GM12878 (cell line): ENCODE measurements at regions of chr1 and their contacts with region 1.

Region 1: DNA sequence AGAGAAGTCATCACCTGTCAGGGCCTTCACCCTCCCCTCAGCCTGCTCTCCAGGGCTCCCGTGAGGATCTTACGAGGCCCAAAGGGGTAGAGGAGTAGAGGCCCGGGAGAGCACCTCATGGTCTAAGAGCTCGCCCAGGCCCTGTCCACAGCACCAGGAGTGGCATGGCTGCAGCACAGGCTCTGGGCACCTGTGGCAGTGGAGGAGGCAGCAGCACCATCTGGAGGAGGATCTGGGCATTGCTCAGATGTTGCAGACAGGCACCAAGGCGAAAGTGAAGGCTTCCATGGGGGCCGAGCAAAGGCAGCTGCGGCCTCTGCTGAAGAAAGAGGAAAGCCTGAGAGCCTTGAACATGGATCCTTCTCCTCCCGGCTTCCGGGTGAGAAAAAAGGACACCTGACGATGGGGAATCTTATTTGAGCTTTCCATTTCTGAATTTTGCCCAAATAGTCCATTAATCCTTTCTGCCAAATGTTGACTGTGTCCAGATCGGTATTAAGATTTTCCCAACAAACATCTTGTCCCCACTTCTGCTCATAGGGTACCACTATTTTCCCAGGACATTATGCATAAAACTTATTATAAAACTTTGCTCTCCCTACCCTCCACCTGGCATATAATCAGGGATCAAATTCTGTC is 604.7 kb downstream of the PTPRC start:
- DNase-seq: peak; percentile 67
- ATAC-seq: peak; percentile 100
- H3K4me3 ChIP-seq: no peak overlapping the region
- H3K27ac ChIP-seq: no peak overlapping the region
- H3K4me1 ChIP-seq: peaks cover 11% of the 10 kb centered on the region
- H3K27me3 ChIP-seq: no peaks in the 10 kb centered on the region
- CTCF ChIP-seq: peak; percentile 91 to 94 (median 93)
- EP300 ChIP-seq: no peak
- POLR2A ChIP-seq: no peak
- RAD21 ChIP-seq: peak; percentile 96

Region 2: GRCh38 chr1:198788561-198789064 is 454.9 kb before region 1 on chr1:
- CTCF ChIA-PET with region 1: interaction called, 21 read pairs
- POLR2A ChIA-PET with region 1: no interaction called
- RAD21 ChIA-PET with region 1: interaction called, 13 read pairs
- SMC1A ChIA-PET with region 1: interaction called, 20 read pairs
- in situ Hi-C with region 1: no loop called
- intact Hi-C with region 1: no loop called
- DNase-seq: no peak
- ATAC-seq: peak; percentile 99
- H3K4me3 ChIP-seq: no peak overlapping the region
- H3K27ac ChIP-seq: no peak overlapping the region
- H3K4me1 ChIP-seq: no peaks in the 10 kb centered on the region
- H3K27me3 ChIP-seq: no peaks in the 10 kb centered on the region
- CTCF ChIP-seq: peak; percentile 30 to 37 (median 32); a peak in 3 of 6 replicates
- EP300 ChIP-seq: peak in 1 of 2 experiments; percentile 11; a peak in 1 of 4 replicates
- POLR2A ChIP-seq: no peak
- RAD21 ChIP-seq: peak; percentile 48; the same call in 1 of the 2 replicates

Region 3: GRCh38 chr1:198922638-198923430 is 320.7 kb before region 1 on chr1:
- CTCF ChIA-PET with region 1: interaction called, 20 read pairs
- POLR2A ChIA-PET with region 1: no interaction called
- RAD21 ChIA-PET with region 1: interaction called, 11 read pairs
- SMC1A ChIA-PET with region 1: interaction called, 9 read pairs
- in situ Hi-C with region 1: no loop called
- intact Hi-C with region 1: no loop called
- DNase-seq: peak; percentile 71
- ATAC-seq: peak; percentile 82
- H3K4me3 ChIP-seq: no peak overlapping the region
- H3K27ac ChIP-seq: peak overlapping the region; percentile 42
- H3K4me1 ChIP-seq: peaks cover 20% of the 10 kb centered on the region
- H3K27me3 ChIP-seq: no peaks in the 10 kb centered on the region
- CTCF ChIP-seq: no peak
- EP300 ChIP-seq: peak; percentile 66 to 77; a peak in 3 of 4 replicates
- POLR2A ChIP-seq: no peak
- RAD21 ChIP-seq: peak; percentile 13; the same call in 1 of the 2 replicates

Region 4: DNA sequence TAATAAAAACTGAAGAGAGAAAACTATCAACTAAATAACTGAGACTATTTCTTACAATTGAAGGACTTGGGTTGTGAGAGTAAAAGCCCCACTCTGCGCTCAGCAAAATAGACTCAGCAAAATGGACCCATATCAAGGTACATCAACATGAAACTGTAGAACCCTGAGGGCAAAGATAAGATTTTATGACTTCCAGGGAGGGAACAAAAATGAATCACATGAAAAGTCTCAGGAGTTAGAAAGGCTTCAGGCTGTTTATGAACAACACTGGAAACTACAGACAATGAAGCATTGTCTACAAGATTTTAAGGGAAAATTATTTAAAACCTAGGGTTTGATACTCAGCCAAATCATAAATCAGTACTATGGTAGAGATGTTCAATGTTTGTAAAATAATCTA is 170.4 kb before region 1 on chr1:
- CTCF ChIA-PET with region 1: interaction called, 9 read pairs
- POLR2A ChIA-PET with region 1: no interaction called
- RAD21 ChIA-PET with region 1: interaction called, 3 read pairs
- SMC1A ChIA-PET with region 1: interaction called, 15 read pairs
- in situ Hi-C with region 1: no loop called
- intact Hi-C with region 1: no loop called
- DNase-seq: no peak
- ATAC-seq: no peak
- H3K4me3 ChIP-seq: no peak overlapping the region
- H3K27ac ChIP-seq: no peak overlapping the region
- H3K4me1 ChIP-seq: peaks cover under 1% of the 10 kb centered on the region; the same call in 1 of the 2 replicates
- H3K27me3 ChIP-seq: no peaks in the 10 kb centered on the region
- CTCF ChIP-seq: no peak
- EP300 ChIP-seq: no peak
- POLR2A ChIP-seq: no peak
- RAD21 ChIP-seq: no peak

Region 5: DNA sequence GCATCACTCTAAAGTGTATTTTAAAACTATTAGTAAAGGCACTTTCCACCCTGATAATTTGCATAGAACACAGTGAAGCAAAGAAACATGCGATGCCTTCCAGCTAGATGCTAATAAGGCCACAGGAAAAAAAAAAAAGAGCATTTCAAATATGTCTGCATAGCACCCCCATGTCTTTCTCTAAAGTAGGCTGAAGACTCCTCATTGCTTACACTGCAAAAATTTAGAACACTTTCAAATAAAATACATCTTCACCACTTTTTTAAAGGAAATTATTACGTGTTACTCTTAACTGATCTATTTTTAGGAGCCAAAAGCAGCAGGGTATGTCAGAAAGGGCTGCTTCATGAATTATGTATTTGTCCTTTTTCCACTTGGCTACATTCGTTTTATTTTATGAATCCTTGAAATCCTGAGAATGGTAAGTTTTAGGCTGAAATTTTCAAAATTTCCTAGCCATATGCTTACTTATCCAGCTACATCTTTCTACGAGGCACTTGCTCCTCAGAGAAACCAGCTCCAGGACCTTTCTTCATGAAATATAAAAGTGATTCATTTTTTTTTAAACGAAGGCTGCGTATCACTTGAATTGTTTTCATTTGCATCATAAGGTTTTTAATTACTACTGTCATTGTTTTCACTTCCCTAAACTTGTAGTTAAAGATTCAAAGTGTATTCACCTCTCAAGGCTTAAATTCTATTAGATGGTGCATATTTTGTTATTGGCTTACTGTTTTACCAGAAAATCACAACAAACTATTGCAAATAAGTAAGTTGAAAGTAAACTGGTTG is 91.7 kb before region 1 on chr1:
- CTCF ChIA-PET with region 1: interaction called, 10 read pairs
- POLR2A ChIA-PET with region 1: no interaction called
- RAD21 ChIA-PET with region 1: interaction called, 5 read pairs
- SMC1A ChIA-PET with region 1: interaction called, 17 read pairs
- in situ Hi-C with region 1: no loop called
- intact Hi-C with region 1: no loop called
- DNase-seq: no peak
- ATAC-seq: peak; percentile 85
- H3K4me3 ChIP-seq: no peak overlapping the region; the same call in 1 of the 2 replicates
- H3K27ac ChIP-seq: peak overlapping the region; percentile 13; the same call in 1 of the 2 replicates
- H3K4me1 ChIP-seq: peaks cover 12% of the 10 kb centered on the region; the same call in 1 of the 2 replicates
- H3K27me3 ChIP-seq: no peaks in the 10 kb centered on the region
- CTCF ChIP-seq: no peak
- EP300 ChIP-seq: peak; percentile 78 to 82; a peak in 3 of 4 replicates
- POLR2A ChIP-seq: no peak
- RAD21 ChIP-seq: no peak

Region 6: DNA sequence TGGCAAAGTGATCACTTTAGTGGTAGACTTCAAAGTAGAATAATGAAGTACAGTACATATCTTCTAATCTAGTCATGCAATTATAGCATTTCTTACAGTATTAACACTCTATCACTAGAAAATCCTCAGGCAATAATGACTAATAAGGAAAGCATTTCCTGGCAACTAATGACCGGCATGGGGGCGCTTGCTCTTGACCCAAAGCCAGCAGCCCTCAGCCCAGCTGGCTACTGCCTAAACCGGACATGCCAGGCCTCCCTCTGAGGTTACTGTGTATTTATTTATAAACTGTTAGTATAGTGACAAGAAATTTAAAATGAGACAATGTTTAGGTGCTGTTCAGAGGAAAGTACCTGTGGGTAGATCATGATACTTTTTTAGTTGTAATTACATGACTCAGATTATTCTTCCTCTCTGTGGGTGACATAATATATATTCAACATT is 29.1 kb after region 1 on chr1:
- CTCF ChIA-PET with region 1: interaction called, 10 read pairs
- POLR2A ChIA-PET with region 1: no interaction called
- RAD21 ChIA-PET with region 1: interaction called, 6 read pairs
- SMC1A ChIA-PET with region 1: interaction called, 5 read pairs
- in situ Hi-C with region 1: no loop called
- intact Hi-C with region 1: no loop called
- DNase-seq: peak; percentile 54
- ATAC-seq: peak; percentile 91
- H3K4me3 ChIP-seq: no peak overlapping the region
- H3K27ac ChIP-seq: no peak overlapping the region
- H3K4me1 ChIP-seq: peaks cover 5% of the 10 kb centered on the region; the same call in 1 of the 2 replicates
- H3K27me3 ChIP-seq: no peaks in the 10 kb centered on the region
- CTCF ChIP-seq: no peak
- EP300 ChIP-seq: peak; percentile 33 to 57; a peak in 2 of 4 replicates
- POLR2A ChIP-seq: no peak
- RAD21 ChIP-seq: no peak

Region 7: GRCh38 chr1:199298825-199299224 is 55.3 kb after region 1 on chr1:
- CTCF ChIA-PET with region 1: no interaction called
- POLR2A ChIA-PET with region 1: no interaction called
- RAD21 ChIA-PET with region 1: no interaction called
- SMC1A ChIA-PET with region 1: no interaction called
- in situ Hi-C with region 1: no loop called
- intact Hi-C with region 1: no loop called
- DNase-seq: no peak
- ATAC-seq: no peak
- H3K4me3 ChIP-seq: no peak overlapping the region
- H3K27ac ChIP-seq: no peak overlapping the region
- H3K4me1 ChIP-seq: no peaks in the 10 kb centered on the region
- H3K27me3 ChIP-seq: no peaks in the 10 kb centered on the region
- CTCF ChIP-seq: no peak
- EP300 ChIP-seq: no peak
- POLR2A ChIP-seq: no peak
- RAD21 ChIP-seq: no peak

Region 8: GRCh38 chr1:199619221-199619620 is 375.7 kb after region 1 on chr1:
- CTCF ChIA-PET with region 1: no interaction called
- POLR2A ChIA-PET with region 1: no interaction called
- RAD21 ChIA-PET with region 1: no interaction called
- SMC1A ChIA-PET with region 1: no interaction called
- in situ Hi-C with region 1: no loop called
- intact Hi-C with region 1: no loop called
- DNase-seq: no peak
- ATAC-seq: no peak
- H3K4me3 ChIP-seq: no peak overlapping the region
- H3K27ac ChIP-seq: no peak overlapping the region
- H3K4me1 ChIP-seq: no peaks in the 10 kb centered on the region
- H3K27me3 ChIP-seq: no peaks in the 10 kb centered on the region; a peak in 2 of 4 replicates
- CTCF ChIP-seq: no peak
- EP300 ChIP-seq: no peak
- POLR2A ChIP-seq: no peak
- RAD21 ChIP-seq: no peak